ENCODE measurements at regions of chr12 and their contacts with region 1.

Region 1: DNA sequence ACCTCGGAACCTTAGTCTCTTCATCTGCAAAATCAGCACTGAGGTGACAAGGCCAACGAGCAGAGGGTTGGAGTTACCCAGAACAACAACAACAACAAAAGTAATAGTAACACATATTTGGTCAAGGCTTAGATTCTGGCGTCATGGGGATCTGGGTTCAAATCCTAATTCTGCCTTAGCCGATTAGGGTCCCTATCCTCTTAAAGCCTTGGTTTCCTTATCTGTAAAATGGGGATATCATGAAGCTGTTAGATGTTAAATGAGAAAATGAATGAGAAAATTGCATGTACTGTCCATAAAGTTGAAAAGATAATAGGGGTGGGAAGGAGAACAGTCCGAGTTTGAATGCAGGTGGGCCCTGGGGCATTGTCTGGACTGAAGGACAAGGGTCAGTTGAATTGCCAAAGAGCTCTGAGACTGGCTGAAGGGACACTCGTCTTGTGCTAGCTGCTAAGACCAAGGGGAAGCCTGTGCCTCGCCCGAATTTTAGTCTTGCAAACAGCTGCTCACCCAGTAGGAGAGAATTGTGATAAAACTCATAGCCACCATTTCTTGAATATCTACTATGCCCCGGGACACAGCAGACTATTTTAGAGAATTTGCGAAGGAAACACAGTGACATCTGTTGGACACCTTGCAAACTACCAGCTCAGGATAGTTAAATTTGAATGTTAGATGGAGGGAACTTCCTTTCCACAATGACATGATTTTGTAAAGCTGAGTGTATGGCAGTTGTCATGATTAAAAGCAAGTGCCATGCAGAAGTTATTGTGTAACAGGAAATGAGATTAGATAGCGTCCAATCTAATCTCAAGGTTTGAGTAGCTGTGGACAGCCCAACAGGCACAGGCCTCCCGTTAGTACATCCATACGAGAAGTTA is 6.8 kb upstream of the HNF1A start:
- DNase-seq: peak; percentile 24
- H3K4me3 Mint-ChIP-seq: no peak overlapping the region
- H3K27ac Mint-ChIP-seq: no peak overlapping the region
- H3K4me1 Mint-ChIP-seq: peaks cover 5% of the 10 kb centered on the region
- H3K27me3 Mint-ChIP-seq: no peaks in the 10 kb centered on the region

Region 2: GRCh38 chr12:120944645-120945231 is 26.8 kb before region 1 on chr12:
- intact Hi-C with region 1: loop called (anchors 1 kb)
- DNase-seq: peak; percentile 46
- H3K4me3 Mint-ChIP-seq: no peak overlapping the region
- H3K27ac Mint-ChIP-seq: peak overlapping the region; percentile 20
- H3K4me1 Mint-ChIP-seq: peaks cover 8% of the 10 kb centered on the region
- H3K27me3 Mint-ChIP-seq: peaks cover 6% of the 10 kb centered on the region